Testis (tissue), 5 donors: ENCODE measurements at regions of chr6 and their contacts with region 1.

Region 1: DNA sequence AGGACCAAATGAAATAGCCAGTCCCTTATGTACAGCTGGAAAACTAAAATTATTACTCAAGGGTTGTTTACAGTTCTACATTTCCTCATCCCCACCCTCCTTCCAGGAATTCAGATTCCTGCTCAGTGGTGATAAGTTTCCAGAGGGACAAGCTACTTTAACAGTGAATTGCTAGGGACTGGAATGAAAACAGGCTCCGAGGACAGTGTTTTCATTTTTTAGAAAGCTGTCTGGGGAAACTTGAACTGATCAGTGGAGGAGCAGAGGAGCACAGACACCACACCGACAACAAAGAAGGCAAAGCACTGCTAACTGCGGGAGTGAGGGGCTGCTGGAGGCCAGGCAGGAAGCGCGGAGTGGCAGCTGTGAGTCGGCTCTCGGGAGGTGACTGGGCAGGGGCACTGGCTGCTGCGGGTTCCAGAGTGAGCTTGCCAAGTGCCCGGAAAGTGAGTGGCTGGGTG is 322.2 kb downstream of the ESR1 start:
- DNase-seq: no peak
- H3K4me3 ChIP-seq: no peak overlapping the region
- H3K27ac ChIP-seq: peak overlapping the region; percentile 47 to 70
- H3K4me1 ChIP-seq: no peaks in the 10 kb centered on the region
- H3K27me3 ChIP-seq: no peaks in the 10 kb centered on the region
- CTCF ChIP-seq: no peak
- POLR2A ChIP-seq: no peak

Region 2: GRCh38 chr6:151349651-151350282 is 780.0 kb before region 1 on chr6:
- intact Hi-C with region 1: no loop called
- DNase-seq: no peak
- H3K4me3 ChIP-seq: no peak overlapping the region
- H3K27ac ChIP-seq: no peak overlapping the region
- H3K4me1 ChIP-seq: no peaks in the 10 kb centered on the region
- H3K27me3 ChIP-seq: no peaks in the 10 kb centered on the region
- CTCF ChIP-seq: no peak
- POLR2A ChIP-seq: no peak

Region 3: GRCh38 chr6:151553416-151554165 is 576.1 kb before region 1 on chr6:
- intact Hi-C with region 1: no loop called
- DNase-seq: no peak
- H3K4me3 ChIP-seq: no peak overlapping the region
- H3K27ac ChIP-seq: no peak overlapping the region
- H3K4me1 ChIP-seq: no peaks in the 10 kb centered on the region
- H3K27me3 ChIP-seq: no peaks in the 10 kb centered on the region
- CTCF ChIP-seq: no peak
- POLR2A ChIP-seq: no peak

Region 4: GRCh38 chr6:151765444-151765886 is 364.3 kb before region 1 on chr6:
- intact Hi-C with region 1: loop called (anchors 10 kb)
- DNase-seq: peak; percentile 76
- H3K4me3 ChIP-seq: no peak overlapping the region
- H3K27ac ChIP-seq: no peak overlapping the region
- H3K4me1 ChIP-seq: no peaks in the 10 kb centered on the region
- H3K27me3 ChIP-seq: no peaks in the 10 kb centered on the region
- CTCF ChIP-seq: peak; percentile 50 to 81 (median 78)
- POLR2A ChIP-seq: no peak

Region 5: DNA sequence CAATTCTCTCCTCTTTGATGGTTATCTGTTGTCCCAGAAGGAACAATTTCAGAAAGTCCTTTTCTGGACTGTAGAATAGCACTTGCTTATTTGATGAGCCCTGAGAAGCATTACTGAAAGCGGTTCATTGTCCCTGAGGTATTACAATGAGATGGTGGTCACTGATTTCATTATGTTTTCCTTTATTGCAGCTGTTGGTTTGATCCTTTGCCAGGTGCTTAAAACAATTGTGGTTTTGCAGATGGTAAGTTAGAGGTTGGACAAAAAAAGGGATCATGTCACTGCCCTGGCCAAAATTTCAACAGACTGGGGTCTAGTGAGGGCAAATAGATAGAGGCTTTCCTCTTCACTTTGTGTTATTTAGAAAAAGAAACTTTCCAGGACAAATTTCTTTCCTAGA is 260.4 kb before region 1 on chr6:
- intact Hi-C with region 1: no loop called
- DNase-seq: no peak
- H3K4me3 ChIP-seq: no peak overlapping the region
- H3K27ac ChIP-seq: no peak overlapping the region
- H3K4me1 ChIP-seq: no peaks in the 10 kb centered on the region
- H3K27me3 ChIP-seq: no peaks in the 10 kb centered on the region
- CTCF ChIP-seq: no peak
- POLR2A ChIP-seq: no peak

Region 6: GRCh38 chr6:152189736-152190135 is 60.0 kb after region 1 on chr6:
- intact Hi-C with region 1: no loop called
- DNase-seq: no peak
- H3K4me3 ChIP-seq: no peak overlapping the region
- H3K27ac ChIP-seq: no peak overlapping the region
- H3K4me1 ChIP-seq: no peaks in the 10 kb centered on the region
- H3K27me3 ChIP-seq: no peaks in the 10 kb centered on the region
- CTCF ChIP-seq: no peak
- POLR2A ChIP-seq: no peak